Mammary epithelial cell (primary cell): ENCODE measurements at regions of chr1 and their contacts with region 1.

Region 1: GRCh38 chr1:34199927-34200326 is 23.2 kb downstream of the C1orf94 start:
- DNase-seq: peak; percentile 37
- H3K4me3 ChIP-seq: no peak overlapping the region
- H3K27ac ChIP-seq: no peak overlapping the region
- H3K4me1 ChIP-seq: no peaks in the 10 kb centered on the region
- H3K27me3 ChIP-seq: no peaks in the 10 kb centered on the region
- CTCF ChIP-seq: no peak

Region 2: GRCh38 chr1:33944027-33944426 is 255.9 kb before region 1 on chr1:
- CTCF ChIA-PET with region 1: no interaction called
- dilution Hi-C with region 1: no loop called
- in situ Hi-C with region 1: no loop called
- intact Hi-C with region 1: no loop called
- DNase-seq: no peak
- H3K4me3 ChIP-seq: no peak overlapping the region
- H3K27ac ChIP-seq: no peak overlapping the region
- H3K4me1 ChIP-seq: no peaks in the 10 kb centered on the region
- H3K27me3 ChIP-seq: no peaks in the 10 kb centered on the region
- CTCF ChIP-seq: no peak

Region 3: DNA sequence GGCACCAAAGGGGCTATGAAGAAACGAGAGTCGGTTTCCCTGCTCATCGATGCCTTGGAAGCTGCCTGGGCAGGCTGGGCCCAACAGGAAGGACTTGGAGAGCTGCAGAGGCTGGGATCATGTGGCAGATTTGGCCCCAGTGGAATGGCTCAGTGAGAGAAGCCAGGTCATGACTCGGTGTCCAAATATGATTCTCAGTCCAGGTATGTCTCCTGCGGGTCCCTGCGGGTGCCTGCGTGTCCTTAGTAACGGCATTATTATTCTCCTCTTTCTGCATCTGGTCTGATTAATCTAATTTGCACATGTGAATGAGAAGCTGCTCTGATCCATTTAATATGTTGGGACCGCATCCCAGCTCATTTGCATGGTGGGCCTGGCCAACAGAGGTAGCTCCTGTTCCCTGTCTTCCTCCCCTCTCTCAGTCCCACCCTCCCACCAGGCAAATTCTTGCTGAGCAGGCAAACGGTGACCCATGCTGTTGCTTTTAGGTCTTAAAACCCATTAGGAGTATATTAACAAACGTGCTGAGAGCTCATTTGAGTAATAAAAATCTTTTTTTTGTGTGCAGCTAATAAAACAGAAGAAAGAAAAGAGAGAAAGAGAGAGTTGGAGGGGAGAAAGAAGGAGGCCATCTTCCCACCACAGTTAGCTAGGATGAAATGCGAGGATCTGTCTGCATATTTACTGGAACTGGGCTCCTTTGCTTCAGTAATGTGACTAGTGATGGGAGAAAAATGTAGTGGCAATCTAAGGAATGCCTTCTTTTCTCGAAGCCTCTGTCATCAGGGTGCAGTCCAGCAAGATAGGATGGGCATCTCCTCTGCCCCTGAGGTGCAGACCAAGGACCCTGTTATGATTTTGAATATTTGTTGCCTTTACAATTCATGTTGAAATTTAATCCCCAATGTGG is 202.5 kb before region 1 on chr1:
- CTCF ChIA-PET with region 1: no interaction called
- dilution Hi-C with region 1: no loop called
- in situ Hi-C with region 1: no loop called
- intact Hi-C with region 1: no loop called
- DNase-seq: no peak
- H3K4me3 ChIP-seq: no peak overlapping the region
- H3K27ac ChIP-seq: no peak overlapping the region
- H3K4me1 ChIP-seq: no peaks in the 10 kb centered on the region
- H3K27me3 ChIP-seq: no peaks in the 10 kb centered on the region
- CTCF ChIP-seq: no peak

Region 4: DNA sequence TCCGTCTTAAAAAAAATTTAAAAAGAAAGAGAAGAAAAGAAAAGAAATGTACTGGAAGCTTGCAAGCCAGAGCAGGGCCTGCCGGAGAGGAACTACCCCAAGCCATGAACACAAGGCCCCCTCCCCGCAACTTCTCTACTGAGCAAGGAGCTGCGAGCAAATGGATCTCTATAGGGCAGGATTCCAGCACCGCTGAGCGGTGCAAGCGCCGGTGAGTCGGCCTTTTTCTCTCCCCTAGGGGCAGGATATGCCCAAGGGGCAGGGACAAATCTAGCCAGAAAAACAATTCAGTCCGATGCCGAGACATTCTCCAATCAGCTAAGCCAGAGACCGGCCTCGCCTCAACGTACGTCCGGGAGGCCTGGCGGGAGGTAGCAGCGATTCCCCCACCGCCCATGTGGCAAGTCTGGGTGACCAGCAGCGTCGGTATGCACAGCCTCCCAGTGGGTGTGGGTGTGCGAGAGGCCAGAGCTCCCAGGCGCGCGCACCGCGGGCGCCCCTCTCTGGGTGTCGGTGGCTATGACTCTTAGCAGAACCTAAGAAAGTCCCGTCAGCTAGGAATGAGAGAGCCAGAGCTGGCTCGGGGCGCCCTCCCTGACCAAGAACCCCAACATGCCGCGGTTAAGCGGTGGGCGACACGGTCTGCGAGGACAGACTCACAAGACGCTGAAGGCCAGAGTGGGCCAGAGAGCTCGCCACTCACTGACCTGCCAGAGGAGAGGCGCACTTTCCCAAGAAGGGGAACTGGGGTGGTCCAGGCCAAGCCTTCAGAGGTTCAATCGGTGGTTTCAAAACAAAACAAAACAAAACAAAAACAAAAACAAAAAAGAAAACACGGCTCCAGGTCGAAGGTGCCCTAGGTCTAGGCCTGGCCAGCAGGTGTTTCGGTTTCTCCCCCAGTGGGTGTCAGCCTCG is 36.8 kb before region 1 on chr1:
- CTCF ChIA-PET with region 1: no interaction called
- dilution Hi-C with region 1: no loop called
- in situ Hi-C with region 1: no loop called
- intact Hi-C with region 1: no loop called
- DNase-seq: peak; percentile 15
- H3K4me3 ChIP-seq: peak overlapping the region in 1 of 3 experiments; percentile 20
- H3K27ac ChIP-seq: no peak overlapping the region
- H3K4me1 ChIP-seq: peaks cover 4% of the 10 kb centered on the region
- H3K27me3 ChIP-seq: peaks cover 16% of the 10 kb centered on the region
- CTCF ChIP-seq: peak; percentile 11 to 53

Region 5: GRCh38 chr1:34235594-34235993 is 35.7 kb after region 1 on chr1:
- CTCF ChIA-PET with region 1: no interaction called
- dilution Hi-C with region 1: loop called (anchors 5 kb)
- in situ Hi-C with region 1: no loop called
- intact Hi-C with region 1: no loop called
- DNase-seq: no peak
- H3K4me3 ChIP-seq: no peak overlapping the region
- H3K27ac ChIP-seq: no peak overlapping the region
- H3K4me1 ChIP-seq: no peaks in the 10 kb centered on the region
- H3K27me3 ChIP-seq: no peaks in the 10 kb centered on the region
- CTCF ChIP-seq: no peak